Kidney (tissue), 22 donors: ENCODE measurements at regions of chr1 and their contacts with region 1.

Region 1: GRCh38 chr1:231357831-231358354 is 19.8 kb downstream of the SPRTN start:
- DNase-seq: peak in 3 of 5 donors; percentile 30 to 82 (median 64)
- H3K4me3 ChIP-seq: no peak overlapping the region
- H3K27ac ChIP-seq: no peak overlapping the region
- H3K4me1 ChIP-seq: peaks cover 0 to 2% (median 0%) of the 10 kb centered on the region in 3 donors
- H3K27me3 ChIP-seq: no peaks in the 10 kb centered on the region
- CTCF ChIP-seq: peak; percentile 91

Region 2: GRCh38 chr1:230550428-230550827 is 807.5 kb before region 1 on chr1:
- intact Hi-C with region 1: no loop called
- DNase-seq: no peak
- H3K4me3 ChIP-seq: no peak overlapping the region
- H3K27ac ChIP-seq: no peak overlapping the region
- H3K4me1 ChIP-seq: peaks cover 0 to 4% (median 0%) of the 10 kb centered on the region in 3 donors
- H3K27me3 ChIP-seq: no peaks in the 10 kb centered on the region
- CTCF ChIP-seq: no peak

Region 3: DNA sequence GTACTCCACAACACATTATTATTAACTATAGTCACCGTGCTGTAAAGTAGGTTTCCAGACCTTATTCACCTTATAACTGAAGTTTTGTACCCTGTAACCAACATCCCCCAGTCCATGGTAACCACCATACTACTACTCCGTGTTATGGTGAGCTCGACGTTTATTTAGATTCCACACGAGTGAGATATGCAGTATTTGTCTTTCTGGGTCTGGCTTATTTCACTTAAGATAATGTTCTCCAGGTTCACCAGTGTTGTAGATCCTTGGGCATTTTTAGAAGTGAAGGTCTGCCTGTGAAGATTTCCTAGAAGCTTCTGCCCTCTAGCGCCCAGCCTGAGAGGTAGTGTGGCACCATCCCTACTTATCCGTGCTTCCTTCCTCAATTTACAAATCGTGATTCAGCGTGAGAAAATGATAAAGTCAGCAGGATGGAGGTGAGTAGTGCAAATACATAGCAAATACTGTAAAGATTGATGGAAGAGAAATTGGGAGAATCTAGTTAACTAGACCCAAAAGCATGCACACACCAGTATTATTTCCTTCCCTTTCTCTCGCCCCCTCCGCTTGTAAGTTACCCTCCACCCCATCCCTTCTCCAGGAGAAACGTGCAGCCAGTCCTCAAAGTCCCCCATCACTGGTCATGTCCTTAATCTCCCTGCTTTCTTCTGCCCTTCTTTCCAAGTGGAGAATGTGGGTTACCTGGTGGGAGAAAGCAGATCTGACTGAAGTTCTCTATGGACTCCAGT is 232.7 kb after region 1 on chr1:
- intact Hi-C with region 1: loop called (anchors 5 kb)
- DNase-seq: peak in 4 of 5 donors; percentile 41 to 75 (median 49)
- H3K4me3 ChIP-seq: no peak overlapping the region
- H3K27ac ChIP-seq: no peak overlapping the region
- H3K4me1 ChIP-seq: no peaks in the 10 kb centered on the region
- H3K27me3 ChIP-seq: no peaks in the 10 kb centered on the region
- CTCF ChIP-seq: peak; percentile 72

Region 4: DNA sequence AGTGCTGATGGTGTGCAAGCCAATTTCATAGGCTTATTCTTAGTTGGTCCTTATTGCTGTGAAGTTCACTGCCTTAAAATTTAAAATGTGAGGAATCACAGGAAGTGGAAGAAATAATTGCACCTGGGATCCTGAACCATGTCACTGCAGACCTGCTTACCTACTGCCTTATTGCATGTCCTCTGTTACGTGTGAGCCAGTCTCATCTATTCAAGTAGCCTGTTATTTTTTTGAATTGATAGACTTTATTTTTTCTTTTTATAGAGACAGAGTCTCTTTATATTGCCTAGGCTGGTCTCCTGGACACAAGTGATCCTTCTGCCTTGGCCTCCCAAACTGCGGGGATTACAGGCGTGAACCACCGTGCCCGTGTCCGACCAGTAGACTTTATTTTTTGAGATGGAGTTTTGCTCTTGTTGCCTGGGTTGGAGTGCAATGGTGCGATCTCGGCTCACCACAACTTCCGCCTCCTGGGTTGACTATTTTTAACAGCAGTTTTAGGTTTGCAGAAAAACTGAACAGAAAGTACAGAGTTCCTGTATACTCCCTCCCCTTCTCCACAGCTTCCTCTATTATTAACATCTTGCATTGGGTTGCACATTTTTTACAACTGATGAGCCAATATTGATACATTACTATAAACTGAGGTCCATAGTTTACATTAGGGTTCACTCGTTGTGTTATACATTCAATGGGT is 254.6 kb after region 1 on chr1:
- intact Hi-C with region 1: no loop called
- DNase-seq: no peak
- H3K4me3 ChIP-seq: no peak overlapping the region
- H3K27ac ChIP-seq: no peak overlapping the region
- H3K4me1 ChIP-seq: no peaks in the 10 kb centered on the region
- H3K27me3 ChIP-seq: no peaks in the 10 kb centered on the region
- CTCF ChIP-seq: no peak